ENCODE measurements at regions of chr2 and their contacts with region 1.

Region 1: DNA sequence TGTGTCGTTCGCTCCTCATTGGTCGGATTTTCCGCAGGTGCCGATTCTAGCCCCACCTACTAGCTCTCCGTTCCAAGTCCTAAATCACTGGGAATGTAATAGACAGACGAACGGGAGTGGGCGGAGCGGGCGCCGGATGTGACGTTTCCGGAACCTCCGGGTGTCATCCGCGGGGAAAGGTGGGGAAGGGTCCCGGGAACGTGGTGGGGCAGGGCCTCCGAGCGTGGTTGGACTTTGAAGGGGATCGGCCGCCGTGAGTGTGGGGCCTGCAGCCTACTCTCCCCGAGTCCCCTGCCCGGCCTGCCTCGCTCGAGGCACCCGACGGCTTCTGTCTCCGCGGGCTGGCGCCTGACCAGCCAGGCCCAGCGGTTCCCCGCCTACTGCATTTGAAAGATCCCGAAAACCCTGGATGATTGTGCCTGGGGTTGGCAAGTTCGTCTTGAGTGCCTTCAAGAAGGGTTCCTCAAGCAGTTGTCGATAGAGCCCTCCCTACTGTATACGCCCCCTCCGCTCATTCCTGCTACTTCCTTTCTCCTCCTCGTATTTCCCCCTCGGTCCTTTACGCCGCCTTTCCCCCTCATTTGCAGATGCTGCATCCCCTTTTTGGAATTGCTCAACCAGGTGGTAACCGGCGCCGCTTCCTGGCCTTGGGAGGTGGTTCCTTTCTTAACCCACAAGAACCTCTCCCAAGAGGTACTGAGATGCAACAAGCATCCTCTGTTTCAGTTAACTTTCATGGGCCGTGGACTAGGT is at the start of gene STAMBP:
- DNase-seq: peak; percentile 97
- ATAC-seq: peak; percentile 96
- H3K4me3 Mint-ChIP-seq: peak within 1 kb of the TSS; percentile 94
- H3K27ac Mint-ChIP-seq: peak within 1 kb of the TSS; percentile 91
- H3K4me1 Mint-ChIP-seq: peaks cover 16% of the 10 kb centered on the region
- H3K27me3 Mint-ChIP-seq: peaks cover 27% of the 10 kb centered on the region
- CTCF ChIP-seq: no peak
- total RNA-seq, gene STAMBP: 34.4 to 40.9 TPM (median 35.2 TPM) in 3 replicates

Region 2: GRCh38 chr2:72972352-72973136 is 856.5 kb before region 1 on chr2:
- CTCF ChIA-PET with region 1: no interaction called
- POLR2A ChIA-PET with region 1: no interaction called
- DNase-seq: no peak
- ATAC-seq: no peak
- H3K4me3 Mint-ChIP-seq: no peak overlapping the region
- H3K27ac Mint-ChIP-seq: no peak overlapping the region
- H3K4me1 Mint-ChIP-seq: peaks cover 46% of the 10 kb centered on the region
- H3K27me3 Mint-ChIP-seq: no peaks in the 10 kb centered on the region
- CTCF ChIP-seq: no peak

Region 3: DNA sequence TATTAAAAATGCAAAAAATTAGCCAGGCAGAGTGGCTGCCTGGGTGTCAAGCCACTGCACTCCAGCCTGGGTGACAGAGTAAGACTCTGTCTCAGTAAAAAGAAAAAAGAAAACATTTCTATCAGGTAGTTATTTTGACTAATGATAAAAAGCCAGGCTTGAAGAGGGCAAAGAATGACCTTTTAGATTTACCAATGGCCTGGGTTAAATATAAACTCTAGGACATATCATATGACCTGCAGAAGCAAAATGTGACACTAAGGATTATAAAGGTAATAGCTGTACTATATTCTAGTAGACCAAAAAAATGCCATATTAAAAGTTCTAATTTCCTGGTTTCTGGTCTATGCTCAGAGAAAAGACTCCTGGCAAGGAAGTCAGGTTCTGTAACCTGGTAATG is 16.4 kb before region 1 on chr2:
- CTCF ChIA-PET with region 1: interaction called, 14 read pairs
- POLR2A ChIA-PET with region 1: no interaction called
- DNase-seq: no peak
- ATAC-seq: no peak
- H3K4me3 Mint-ChIP-seq: no peak overlapping the region
- H3K27ac Mint-ChIP-seq: no peak overlapping the region
- H3K4me1 Mint-ChIP-seq: no peaks in the 10 kb centered on the region
- H3K27me3 Mint-ChIP-seq: peaks cover 50% of the 10 kb centered on the region
- CTCF ChIP-seq: no peak

Region 4: DNA sequence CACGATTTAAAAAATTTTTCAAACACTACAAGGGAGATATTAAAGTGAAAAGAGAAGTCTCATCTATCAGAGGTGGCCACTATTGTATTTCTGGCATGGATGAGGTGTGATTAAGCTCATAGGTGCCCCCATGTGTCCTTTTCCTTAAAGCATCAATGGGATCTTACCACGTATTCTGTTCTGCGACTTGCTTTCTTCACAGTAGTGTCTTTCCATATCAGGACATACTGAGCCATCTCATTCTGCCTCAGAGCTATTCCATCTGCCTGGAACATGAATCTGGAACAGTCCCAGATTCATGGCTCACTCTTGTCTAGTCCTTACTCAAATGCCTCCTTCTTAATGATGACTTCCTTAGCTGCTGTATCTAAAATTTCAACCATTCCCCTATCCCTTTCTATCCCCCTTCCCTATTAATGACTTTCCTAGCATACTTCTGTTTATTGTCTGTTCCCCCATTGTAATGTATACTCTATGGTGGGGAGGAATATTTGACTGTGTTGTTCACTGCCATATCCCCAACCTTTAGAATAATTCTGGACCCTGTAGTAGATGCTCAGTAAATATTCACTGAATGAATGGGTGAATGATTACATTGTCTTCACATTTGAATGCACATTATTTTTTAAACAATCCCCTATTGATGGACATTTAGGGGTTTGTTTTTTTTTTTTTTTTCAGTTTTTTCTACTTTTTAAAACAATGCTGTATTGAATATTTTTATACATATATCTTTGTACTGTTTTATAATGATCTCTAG is 10.8 kb after region 1 on chr2:
- CTCF ChIA-PET with region 1: interaction called, 20 read pairs
- POLR2A ChIA-PET with region 1: no interaction called
- DNase-seq: no peak
- ATAC-seq: peak; percentile 24; the same call in 1 of the 2 replicates
- H3K4me3 Mint-ChIP-seq: no peak overlapping the region
- H3K27ac Mint-ChIP-seq: no peak overlapping the region
- H3K4me1 Mint-ChIP-seq: no peaks in the 10 kb centered on the region
- H3K27me3 Mint-ChIP-seq: no peaks in the 10 kb centered on the region
- CTCF ChIP-seq: no peak